ENCODE measurements at regions of chr1 and their contacts with region 1.

Region 1: GRCh38 chr1:172931761-172932160 is 119.0 kb downstream of the TNFSF18 start:
- DNase-seq: no peak

Region 2: GRCh38 chr1:172745014-172745413 is 186.7 kb before region 1 on chr1:
- intact Hi-C with region 1: no loop called
- DNase-seq: no peak

Region 3: DNA sequence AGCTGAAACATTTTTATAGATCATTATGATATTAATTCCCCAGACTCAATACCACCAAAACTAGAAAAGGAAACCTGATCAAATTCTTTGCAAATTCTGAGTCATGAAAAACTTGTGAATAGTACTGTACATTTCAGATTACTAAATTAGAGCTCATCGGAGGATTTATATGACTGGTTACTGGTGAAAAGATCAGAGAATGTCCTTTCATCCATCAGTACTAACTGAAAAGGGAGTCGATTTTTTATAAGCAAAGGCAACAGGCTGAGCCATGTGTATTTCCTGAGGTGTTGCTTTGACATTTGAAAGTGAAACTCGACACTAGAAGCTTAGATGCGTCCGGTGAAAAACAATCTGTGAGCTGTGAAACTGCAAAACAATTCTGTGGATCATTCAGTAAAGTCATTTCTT is 36.7 kb before region 1 on chr1:
- intact Hi-C with region 1: loop called (anchors 5 kb)
- DNase-seq: no peak

Measured in cardiac septum (tissue), 1 donor.